ENCODE measurements at regions of chr4 and their contacts with region 1.

Region 1: GRCh38 chr4:161799710-161800109 is 364.1 kb downstream of the FSTL5 start:
- DNase-seq: peak; percentile 87
- ATAC-seq: peak; percentile 96
- H3K4me3 ChIP-seq: peak overlapping the region; percentile 28; the same call in 1 of the 2 replicates
- H3K27ac ChIP-seq: peak overlapping the region; percentile 88
- H3K4me1 ChIP-seq: peaks cover 22% of the 10 kb centered on the region
- H3K27me3 ChIP-seq: no peaks in the 10 kb centered on the region
- CTCF ChIP-seq: no peak

Region 2: GRCh38 chr4:161577579-161578301 is 222.0 kb before region 1 on chr4:
- CTCF ChIA-PET with region 1: no interaction called
- POLR2A ChIA-PET with region 1: no interaction called
- intact Hi-C with region 1: loop called (anchors 5 kb)
- DNase-seq: peak; percentile 57
- ATAC-seq: peak; percentile 55; the same call in 1 of the 2 replicates
- H3K4me3 ChIP-seq: no peak overlapping the region
- H3K27ac ChIP-seq: no peak overlapping the region
- H3K4me1 ChIP-seq: peaks cover 5% of the 10 kb centered on the region; the same call in 1 of the 2 replicates
- H3K27me3 ChIP-seq: no peaks in the 10 kb centered on the region
- CTCF ChIP-seq: no peak

Region 3: DNA sequence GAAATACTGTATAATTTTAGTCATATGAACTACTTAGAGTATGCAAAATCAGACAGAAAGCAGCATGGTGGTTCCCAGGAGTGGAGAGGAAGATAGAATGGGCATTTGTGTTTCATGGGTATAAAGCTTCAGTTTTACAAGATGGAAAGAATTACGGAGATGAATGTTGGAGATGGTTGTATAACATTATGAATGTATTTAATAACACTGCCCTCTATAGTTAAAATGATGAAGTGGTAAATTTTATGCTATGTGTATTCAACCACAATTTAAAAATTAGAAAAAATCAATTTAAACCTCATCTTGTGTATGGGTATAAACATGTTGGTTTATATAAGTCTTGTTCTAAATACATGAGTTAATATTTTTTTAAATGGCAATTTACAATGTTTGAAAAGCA is 157.0 kb before region 1 on chr4:
- CTCF ChIA-PET with region 1: no interaction called
- POLR2A ChIA-PET with region 1: no interaction called
- intact Hi-C with region 1: loop called (anchors 2 kb)
- DNase-seq: peak; percentile 36
- ATAC-seq: peak; percentile 45
- H3K4me3 ChIP-seq: no peak overlapping the region
- H3K27ac ChIP-seq: no peak overlapping the region
- H3K4me1 ChIP-seq: no peaks in the 10 kb centered on the region
- H3K27me3 ChIP-seq: no peaks in the 10 kb centered on the region
- CTCF ChIP-seq: peak; percentile 51

Region 4: DNA sequence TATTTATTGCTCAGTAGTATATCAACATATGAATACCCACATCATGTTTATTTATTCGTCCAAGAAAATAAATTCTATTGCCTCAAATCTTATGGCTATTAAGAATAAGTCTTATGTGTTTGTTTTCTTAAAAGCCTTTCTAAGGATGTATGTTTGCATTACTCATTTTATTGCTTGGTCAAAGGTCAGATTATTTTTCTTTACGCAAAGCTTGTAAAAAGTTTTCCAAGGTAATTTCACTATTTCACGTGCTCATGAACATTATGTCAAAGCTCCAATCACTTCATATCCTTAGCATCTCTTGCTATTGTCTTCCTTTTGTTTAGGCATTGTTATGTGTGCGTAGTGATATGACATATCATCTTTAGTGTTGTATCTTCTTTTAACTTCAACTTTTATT is 622.6 kb after region 1 on chr4:
- CTCF ChIA-PET with region 1: no interaction called
- POLR2A ChIA-PET with region 1: no interaction called
- intact Hi-C with region 1: no loop called
- DNase-seq: peak; percentile 35
- ATAC-seq: peak; percentile 57
- H3K4me3 ChIP-seq: no peak overlapping the region
- H3K27ac ChIP-seq: no peak overlapping the region
- H3K4me1 ChIP-seq: no peaks in the 10 kb centered on the region
- H3K27me3 ChIP-seq: no peaks in the 10 kb centered on the region
- CTCF ChIP-seq: no peak